ENCODE measurements at regions of chr5 and their contacts with region 1.

Region 1: GRCh38 chr5:36739751-36740221 is 133.4 kb downstream of the SLC1A3 start:
- DNase-seq: peak; percentile 46 to 73 (median 66)
- ATAC-seq: peak; percentile 91
- H3K4me3 ChIP-seq: no peak overlapping the region
- H3K4me3 Mint-ChIP-seq: no peak overlapping the region
- H3K27ac ChIP-seq: no peak overlapping the region
- H3K27ac Mint-ChIP-seq: peak overlapping the region in 1 of 9 donors; percentile 47
- H3K4me1 ChIP-seq: peaks cover 0 to 4% of the 10 kb centered on the region in 2 donors
- H3K4me1 Mint-ChIP-seq: peaks cover 8 to 13% (median 10%) of the 10 kb centered on the region in 7 donors
- H3K27me3 ChIP-seq: no peaks in the 10 kb centered on the region
- H3K27me3 Mint-ChIP-seq: peaks cover 29 to 44% (median 36%) of the 10 kb centered on the region in 5 donors

Region 2: DNA sequence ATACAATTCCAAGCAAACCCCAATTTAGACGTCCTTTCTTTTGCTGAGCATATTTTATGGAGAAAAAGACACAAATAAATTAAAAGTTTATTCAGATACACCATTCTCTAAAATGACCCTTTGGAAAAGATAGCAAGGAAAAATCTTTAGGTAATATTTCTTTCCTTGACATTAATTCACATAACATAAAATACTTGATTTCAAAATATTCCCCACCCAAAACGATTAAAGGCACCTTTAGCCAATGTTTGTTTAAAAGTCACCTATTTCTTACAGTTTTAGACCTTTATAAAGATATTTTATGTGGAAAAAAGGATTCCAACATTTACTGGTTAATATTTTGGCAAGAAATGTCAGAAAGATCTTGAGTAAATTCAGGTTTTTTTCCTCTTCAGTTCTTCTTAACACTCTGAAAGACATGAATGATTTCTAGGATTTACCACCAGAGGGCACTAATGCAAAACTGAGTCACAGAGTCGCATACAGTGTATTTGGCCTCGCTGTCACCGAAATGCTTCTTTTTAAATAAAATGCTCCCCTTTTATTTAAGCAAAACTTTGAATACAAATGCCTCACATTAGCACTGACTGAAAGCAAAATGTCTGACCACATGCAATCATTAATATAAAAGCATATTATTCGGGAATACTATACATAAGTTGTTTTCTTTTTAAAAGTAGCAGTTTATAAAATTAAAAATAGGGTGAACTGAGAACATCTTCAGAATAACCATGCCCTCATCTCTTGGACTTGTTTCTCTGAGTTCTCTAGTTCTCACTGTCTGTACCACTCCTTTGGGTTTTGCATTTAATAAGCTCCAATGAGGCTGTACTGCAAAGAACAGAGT is 10.9 kb before region 1 on chr5:
- CTCF ChIA-PET with region 1: interaction called, 13 read pairs
- POLR2A ChIA-PET with region 1: no interaction called
- intact Hi-C with region 1: loop called in 1 of 2 experiments (anchors 1 kb)
- DNase-seq: peak in 7 of 9 donors; percentile 24 to 69 (median 58)
- ATAC-seq: peak; percentile 59
- H3K4me3 ChIP-seq: no peak overlapping the region
- H3K4me3 Mint-ChIP-seq: no peak overlapping the region
- H3K27ac ChIP-seq: no peak overlapping the region
- H3K27ac Mint-ChIP-seq: peak overlapping the region in 1 of 9 donors; percentile 14
- H3K4me1 ChIP-seq: peaks cover 0 to 2% of the 10 kb centered on the region in 2 donors
- H3K4me1 Mint-ChIP-seq: peaks cover 9 to 19% (median 15%) of the 10 kb centered on the region in 7 donors
- H3K27me3 ChIP-seq: no peaks in the 10 kb centered on the region
- H3K27me3 Mint-ChIP-seq: peaks cover 0 to 11% (median 4%) of the 10 kb centered on the region in 5 donors

Region 3: GRCh38 chr5:36820900-36821299 is 81.1 kb after region 1 on chr5:
- CTCF ChIA-PET with region 1: no interaction called
- POLR2A ChIA-PET with region 1: no interaction called
- intact Hi-C with region 1: no loop called
- DNase-seq: no peak
- ATAC-seq: peak; percentile 77
- H3K4me3 ChIP-seq: no peak overlapping the region
- H3K4me3 Mint-ChIP-seq: no peak overlapping the region
- H3K27ac ChIP-seq: no peak overlapping the region
- H3K27ac Mint-ChIP-seq: no peak overlapping the region
- H3K4me1 ChIP-seq: no peaks in the 10 kb centered on the region
- H3K4me1 Mint-ChIP-seq: no peaks in the 10 kb centered on the region
- H3K27me3 ChIP-seq: no peaks in the 10 kb centered on the region
- H3K27me3 Mint-ChIP-seq: peaks cover 17 to 44% (median 33%) of the 10 kb centered on the region in 5 donors

Region 4: GRCh38 chr5:36870399-36871040 is 130.7 kb after region 1 on chr5:
- CTCF ChIA-PET with region 1: interaction called, 13 read pairs
- POLR2A ChIA-PET with region 1: no interaction called
- intact Hi-C with region 1: loop called (anchors 1 kb)
- DNase-seq: peak in 7 of 9 donors; percentile 56 to 78 (median 71)
- ATAC-seq: peak; percentile 92
- H3K4me3 ChIP-seq: no peak overlapping the region
- H3K4me3 Mint-ChIP-seq: peak overlapping the region in 9 of 10 donors; percentile 13 to 75 (median 57)
- H3K27ac ChIP-seq: no peak overlapping the region
- H3K27ac Mint-ChIP-seq: peak overlapping the region in 8 of 9 donors; percentile 6 to 70 (median 38)
- H3K4me1 ChIP-seq: peaks cover 12% of the 10 kb centered on the region in 2 donors
- H3K4me1 Mint-ChIP-seq: peaks cover 20 to 64% (median 53%) of the 10 kb centered on the region in 7 donors
- H3K27me3 ChIP-seq: no peaks in the 10 kb centered on the region
- H3K27me3 Mint-ChIP-seq: no peaks in the 10 kb centered on the region

Region 5: DNA sequence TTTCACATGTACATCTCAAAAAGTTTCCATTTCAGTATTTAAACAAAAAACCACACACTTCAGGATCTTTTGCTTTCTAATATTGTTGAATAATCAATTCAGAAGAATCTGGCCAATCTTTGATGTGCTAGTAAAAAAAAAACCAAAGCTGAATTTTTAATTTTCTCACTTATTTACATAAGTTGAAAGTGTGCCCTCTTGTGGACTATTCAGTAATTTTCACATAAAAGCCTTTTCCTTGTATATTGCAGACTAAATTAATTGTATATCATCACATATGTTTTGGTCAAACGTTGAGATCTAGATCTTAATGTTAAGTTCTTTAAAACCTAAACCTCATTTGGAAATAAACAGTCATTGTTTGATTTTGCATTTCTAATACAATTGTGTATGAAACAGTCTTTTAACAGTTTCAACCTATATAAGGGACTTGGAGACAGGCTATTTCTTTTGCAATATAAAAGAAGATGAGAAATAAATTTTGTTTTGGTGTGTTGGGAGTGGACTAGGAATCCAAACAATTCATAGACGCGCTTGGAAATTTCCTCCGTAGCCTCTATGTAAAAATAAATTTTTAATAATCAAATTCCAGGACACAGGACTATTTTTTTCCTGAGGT is 204.9 kb after region 1 on chr5:
- CTCF ChIA-PET with region 1: interaction called, 3 read pairs
- POLR2A ChIA-PET with region 1: no interaction called
- intact Hi-C with region 1: loop called (anchors 1 to 2 kb)
- DNase-seq: peak in 7 of 9 donors; percentile 7 to 57 (median 47)
- ATAC-seq: peak; percentile 73
- H3K4me3 ChIP-seq: no peak overlapping the region
- H3K4me3 Mint-ChIP-seq: no peak overlapping the region
- H3K27ac ChIP-seq: no peak overlapping the region
- H3K27ac Mint-ChIP-seq: no peak overlapping the region
- H3K4me1 ChIP-seq: peaks cover 0 to 4% of the 10 kb centered on the region in 2 donors
- H3K4me1 Mint-ChIP-seq: peaks cover 10 to 80% (median 69%) of the 10 kb centered on the region in 7 donors
- H3K27me3 ChIP-seq: no peaks in the 10 kb centered on the region
- H3K27me3 Mint-ChIP-seq: no peaks in the 10 kb centered on the region

Region 6: DNA sequence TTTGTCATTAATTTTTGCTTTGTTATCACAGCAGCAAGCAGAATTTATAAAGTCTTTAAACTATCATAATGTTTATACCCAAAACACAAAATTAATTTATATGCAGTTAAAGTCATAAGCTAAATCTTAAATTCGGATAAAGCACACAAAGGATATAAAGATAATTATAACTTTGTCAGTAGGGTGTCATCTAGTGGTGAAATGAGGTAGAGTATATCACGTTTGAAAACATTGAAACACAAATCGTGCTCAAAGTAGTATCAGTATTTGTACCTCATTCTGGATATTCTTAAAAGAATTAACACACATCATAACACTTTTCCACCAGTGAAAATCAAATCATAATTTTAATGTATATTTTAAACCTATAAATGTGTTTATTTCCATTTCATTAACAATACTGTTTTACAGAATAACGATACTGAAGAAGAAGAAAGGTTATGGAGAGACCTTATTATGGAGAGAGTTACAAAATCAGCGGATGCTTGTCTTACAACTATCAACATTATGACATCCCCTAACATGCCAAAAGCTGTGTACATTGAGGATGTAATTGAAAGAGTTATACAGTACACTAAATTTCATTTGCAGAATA is 266.3 kb after region 1 on chr5:
- CTCF ChIA-PET with region 1: interaction called, 5 read pairs
- POLR2A ChIA-PET with region 1: no interaction called
- intact Hi-C with region 1: loop called (anchors 1 kb)
- DNase-seq: peak in 6 of 9 donors; percentile 1 to 25 (median 13)
- ATAC-seq: peak; percentile 54
- H3K4me3 ChIP-seq: no peak overlapping the region
- H3K4me3 Mint-ChIP-seq: no peak overlapping the region
- H3K27ac ChIP-seq: no peak overlapping the region
- H3K27ac Mint-ChIP-seq: peak overlapping the region in 1 of 9 donors; percentile 6
- H3K4me1 ChIP-seq: no peaks in the 10 kb centered on the region
- H3K4me1 Mint-ChIP-seq: no peaks in the 10 kb centered on the region
- H3K27me3 ChIP-seq: no peaks in the 10 kb centered on the region
- H3K27me3 Mint-ChIP-seq: no peaks in the 10 kb centered on the region

Region 7: DNA sequence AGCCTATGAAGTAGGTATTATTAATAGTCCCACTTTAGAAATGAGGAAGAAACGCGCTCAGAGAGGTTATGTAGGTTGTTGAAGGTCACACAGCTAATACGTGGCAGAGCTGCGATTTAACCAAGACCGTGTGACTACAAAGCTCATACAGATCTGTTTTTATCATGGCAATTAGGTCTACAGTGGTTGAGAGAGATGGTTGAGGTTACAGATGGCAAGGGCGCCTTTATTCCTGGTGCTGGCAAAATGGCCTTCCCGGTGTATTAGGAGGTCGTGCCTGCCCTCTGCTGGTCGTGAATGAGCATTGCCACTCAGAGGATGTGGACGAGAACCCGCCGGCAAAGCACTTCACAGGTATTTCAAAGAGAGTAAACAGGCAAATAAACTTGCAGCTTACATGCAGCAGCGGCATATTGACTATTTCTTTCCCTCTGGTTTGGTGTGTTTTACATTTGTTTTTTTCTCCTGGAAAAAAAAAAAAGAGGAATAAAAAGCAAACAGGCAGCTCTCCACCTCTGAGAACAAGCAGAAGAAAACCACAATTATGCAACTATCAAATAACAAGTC is 1453.3 kb after region 1 on chr5:
- CTCF ChIA-PET with region 1: no interaction called
- POLR2A ChIA-PET with region 1: no interaction called
- intact Hi-C with region 1: loop called in 1 of 2 experiments (anchors 10 kb)
- DNase-seq: peak in 6 of 9 donors; percentile 25 to 57 (median 32)
- ATAC-seq: peak; percentile 73
- H3K4me3 ChIP-seq: no peak overlapping the region
- H3K4me3 Mint-ChIP-seq: peak overlapping the region in 1 of 10 donors; percentile 2
- H3K27ac ChIP-seq: no peak overlapping the region
- H3K27ac Mint-ChIP-seq: no peak overlapping the region
- H3K4me1 ChIP-seq: no peaks in the 10 kb centered on the region
- H3K4me1 Mint-ChIP-seq: peaks cover 0 to 5% (median 0%) of the 10 kb centered on the region in 7 donors
- H3K27me3 ChIP-seq: no peaks in the 10 kb centered on the region
- H3K27me3 Mint-ChIP-seq: peaks cover 24 to 35% (median 30%) of the 10 kb centered on the region in 5 donors

Measured in naive thymus-derived CD4-positive, alpha-beta T cell (primary cell).